OCI-LY7 (cell line): ENCODE measurements at regions of chr1 and their contacts with region 1.

Region 1: DNA sequence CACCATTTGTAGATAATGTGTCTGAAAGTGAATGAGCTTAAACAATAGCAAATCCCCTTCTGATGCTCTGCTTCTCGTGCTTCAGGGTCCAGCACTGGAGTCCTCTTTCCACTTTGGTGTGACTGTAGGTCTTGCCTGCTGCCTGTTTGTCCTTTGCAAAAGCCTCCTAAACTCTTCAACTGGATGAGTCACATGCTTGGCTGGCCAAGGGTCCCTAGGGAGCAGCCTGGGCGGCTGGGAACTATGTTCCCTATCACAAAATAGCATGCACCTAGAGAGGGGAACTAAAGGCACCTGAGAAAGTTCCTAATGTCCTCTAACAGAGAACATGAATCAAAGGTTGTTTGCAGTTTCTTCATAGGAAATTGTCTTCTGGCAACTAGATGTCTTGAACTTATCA is 607.2 kb upstream of the PLXNA2 start:
- DNase-seq: no peak
- H3K4me3 ChIP-seq: no peak overlapping the region
- H3K27ac ChIP-seq: no peak overlapping the region
- H3K4me1 ChIP-seq: no peaks in the 10 kb centered on the region
- CTCF ChIP-seq: no peak

Region 2: DNA sequence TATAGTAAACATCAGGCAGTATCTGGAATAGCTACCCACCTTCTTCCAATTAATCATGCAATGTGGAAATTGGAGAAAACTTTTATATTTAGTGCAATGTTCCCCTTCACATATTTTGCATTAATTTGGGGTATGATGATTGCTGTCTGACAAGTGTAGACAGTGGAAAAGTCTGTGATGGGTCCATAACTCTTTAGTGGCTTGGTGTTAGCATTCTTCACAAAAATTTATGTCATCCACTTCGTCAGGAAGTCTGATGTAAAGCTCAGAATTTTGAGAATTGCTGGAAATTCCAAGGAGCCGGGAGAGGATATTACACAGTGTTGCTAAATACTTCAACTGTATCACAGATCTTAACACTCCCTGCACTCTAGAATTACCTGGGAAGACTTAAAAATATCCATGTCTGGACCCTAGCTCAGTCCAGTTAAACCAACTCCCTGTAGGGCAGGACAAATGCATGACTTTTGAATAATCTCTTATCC is 57.5 kb before region 1 on chr1:
- CTCF ChIA-PET with region 1: no interaction called
- POLR2A ChIA-PET with region 1: interaction called, 10 read pairs
- intact Hi-C with region 1: no loop called
- DNase-seq: no peak
- H3K4me3 ChIP-seq: no peak overlapping the region
- H3K27ac ChIP-seq: no peak overlapping the region
- H3K4me1 ChIP-seq: no peaks in the 10 kb centered on the region
- CTCF ChIP-seq: no peak

Region 3: GRCh38 chr1:208885060-208885459 is 33.7 kb after region 1 on chr1:
- CTCF ChIA-PET with region 1: no interaction called
- POLR2A ChIA-PET with region 1: no interaction called
- intact Hi-C with region 1: no loop called
- DNase-seq: no peak
- H3K4me3 ChIP-seq: no peak overlapping the region
- H3K27ac ChIP-seq: no peak overlapping the region
- H3K4me1 ChIP-seq: no peaks in the 10 kb centered on the region
- CTCF ChIP-seq: no peak